ENCODE measurements at regions of chr2 and their contacts with region 1.

Region 1: DNA sequence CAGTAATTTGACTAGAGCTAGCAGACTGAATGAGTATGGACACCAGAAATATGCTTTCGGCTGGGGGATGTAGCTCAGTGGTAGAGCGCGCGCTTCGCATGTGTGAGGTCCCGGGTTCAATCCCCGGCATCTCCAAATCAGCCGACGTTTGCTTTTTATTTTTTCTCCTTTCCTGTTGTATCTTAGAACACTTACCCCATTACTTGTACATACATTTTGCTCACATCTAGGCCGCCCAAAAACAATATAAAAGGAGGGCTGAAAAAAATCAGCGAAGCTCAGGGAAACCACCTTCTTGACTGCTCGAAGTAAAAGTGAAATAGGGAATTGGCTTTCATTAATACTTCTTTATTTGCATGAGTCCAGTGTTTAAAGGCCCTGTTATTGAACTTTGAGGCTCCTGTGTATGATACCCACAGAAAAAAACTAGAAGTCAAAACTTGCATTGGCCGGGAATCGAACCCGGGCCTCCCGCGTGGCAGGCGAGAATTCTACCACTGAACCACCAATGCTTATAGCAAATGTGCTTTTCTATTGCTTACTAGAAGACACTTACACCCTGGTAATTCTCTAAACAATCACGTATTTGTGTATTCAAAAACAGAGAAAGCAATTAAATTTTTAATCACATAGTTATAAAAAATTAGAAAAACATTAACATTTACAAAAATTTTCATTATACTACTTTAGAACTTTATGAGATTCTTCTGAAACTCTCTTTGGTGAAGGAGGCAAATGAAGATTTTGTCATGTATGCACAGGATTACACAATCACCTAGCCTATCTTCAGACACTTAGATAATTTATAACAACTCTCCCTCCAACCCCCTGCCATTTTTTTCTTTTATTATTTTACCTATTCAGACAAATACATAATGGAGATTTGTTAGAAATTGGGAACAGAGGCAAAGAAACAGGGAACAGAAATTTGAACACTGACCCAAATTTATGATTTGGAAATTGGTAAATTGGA is 35.2 kb upstream of the GPD2 start:
- DNase-seq: peak; percentile 71 to 75
- H3K4me3 ChIP-seq: peak overlapping the region; percentile 54 to 77 (median 66)
- H3K27ac ChIP-seq: peak overlapping the region; percentile 89 to 98
- H3K4me1 ChIP-seq: no peaks in the 10 kb centered on the region
- H3K27me3 ChIP-seq: no peaks in the 10 kb centered on the region
- CTCF ChIP-seq: peak in 1 of 3 donors; percentile 27
- POLR2A ChIP-seq: no peak

Region 2: DNA sequence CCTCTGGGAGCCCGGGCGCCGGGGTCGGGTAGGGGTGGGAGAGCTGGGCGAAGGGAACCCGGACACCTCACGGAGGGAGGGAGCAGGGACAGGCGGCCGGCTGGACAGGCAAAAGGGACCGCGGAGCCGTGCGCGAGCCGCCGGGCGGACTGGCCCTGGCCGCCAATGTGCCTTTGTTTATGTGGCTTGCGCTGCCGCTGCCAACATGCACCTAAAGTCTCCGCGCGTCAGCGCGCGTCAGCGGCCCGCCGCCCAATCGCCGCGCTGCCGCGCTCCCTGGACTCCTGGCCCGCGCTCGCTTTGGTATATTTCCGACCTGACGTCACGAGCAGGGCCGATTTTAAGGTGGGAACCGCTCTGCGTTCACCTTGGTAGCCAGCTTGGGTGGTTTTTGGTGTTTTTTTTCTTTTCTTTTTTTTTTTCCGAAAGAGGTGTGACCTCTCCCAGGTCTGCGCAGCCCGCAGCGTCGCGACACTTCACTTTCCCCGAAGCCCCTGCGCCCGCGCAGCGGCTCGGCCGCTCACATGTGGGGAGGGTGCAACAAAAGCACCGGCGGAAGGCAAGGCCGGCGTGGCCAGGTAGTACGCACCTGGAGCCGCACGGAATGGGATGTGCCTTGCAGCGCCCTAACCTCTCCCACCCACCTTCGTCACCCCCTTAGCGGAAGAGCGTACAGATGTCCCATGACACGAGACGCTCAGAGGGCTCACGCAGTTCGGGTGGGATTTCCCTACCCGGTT is 68.3 kb before region 1 on chr2 and contains the start of gene NR4A2:
- intact Hi-C with region 1: loop called (anchors 5 kb)
- DNase-seq: peak; percentile 88 to 92
- H3K4me3 ChIP-seq: peak within 1 kb of the TSS; percentile 81 to 88 (median 84)
- H3K27ac ChIP-seq: peak within 1 kb of the TSS; percentile 98 to 99
- H3K4me1 ChIP-seq: no peaks in the 10 kb centered on the region
- H3K27me3 ChIP-seq: no peaks in the 10 kb centered on the region
- CTCF ChIP-seq: no peak
- POLR2A ChIP-seq: peak; percentile 75
- total RNA-seq, gene NR4A2: 3.8 to 29.4 (median 7.9) TPM